ENCODE measurements at regions of chr5 and their contacts with region 1.

Region 1: GRCh38 chr5:152221721-152222629 is 183.1 kb downstream of the NMUR2 start:
- DNase-seq: no peak
- ATAC-seq: peak in 7 of 8 donors; percentile 38 to 96 (median 82)
- H3K4me3 ChIP-seq: no peak overlapping the region
- H3K27ac ChIP-seq: peak overlapping the region; percentile 42 to 78 (median 68)
- H3K4me1 ChIP-seq: peaks cover 0 to 24% (median 8%) of the 10 kb centered on the region in 9 donors
- H3K27me3 ChIP-seq: no peaks in the 10 kb centered on the region
- CTCF ChIP-seq: no peak

Region 2: GRCh38 chr5:152259702-152260101 is 37.7 kb after region 1 on chr5:
- intact Hi-C with region 1: loop called in 1 of 10 experiments (anchors 5 kb)
- DNase-seq: peak in 1 of 2 donors; percentile 9
- ATAC-seq: peak; percentile 34 to 97 (median 80)
- H3K4me3 ChIP-seq: no peak overlapping the region
- H3K27ac ChIP-seq: peak overlapping the region in 1 of 10 donors; percentile 3
- H3K4me1 ChIP-seq: peaks cover 0 to 8% (median 0%) of the 10 kb centered on the region in 9 donors
- H3K27me3 ChIP-seq: no peaks in the 10 kb centered on the region
- CTCF ChIP-seq: no peak

Region 3: GRCh38 chr5:152264645-152265254 is 42.8 kb after region 1 on chr5:
- intact Hi-C with region 1: loop called in 2 of 10 experiments (anchors 5 kb)
- DNase-seq: no peak
- ATAC-seq: no peak
- H3K4me3 ChIP-seq: no peak overlapping the region
- H3K27ac ChIP-seq: no peak overlapping the region
- H3K4me1 ChIP-seq: peaks cover 0 to 13% (median 3%) of the 10 kb centered on the region in 9 donors
- H3K27me3 ChIP-seq: no peaks in the 10 kb centered on the region
- CTCF ChIP-seq: no peak